Heart left ventricle (tissue), 16 donors: ENCODE measurements at regions of chr3 and their contacts with region 1.

Region 1: GRCh38 chr3:169271936-169272335 is 391.6 kb downstream of the MECOM start:
- DNase-seq: no peak
- ATAC-seq: no peak
- H3K4me3 ChIP-seq: no peak overlapping the region
- H3K27ac ChIP-seq: no peak overlapping the region
- H3K4me1 ChIP-seq: no peaks in the 10 kb centered on the region
- H3K27me3 ChIP-seq: no peaks in the 10 kb centered on the region
- CTCF ChIP-seq: no peak
- POLR2A ChIP-seq: no peak

Region 2: GRCh38 chr3:168534761-168535160 is 737.2 kb before region 1 on chr3:
- intact Hi-C with region 1: no loop called
- DNase-seq: no peak
- ATAC-seq: no peak
- H3K4me3 ChIP-seq: no peak overlapping the region
- H3K27ac ChIP-seq: no peak overlapping the region
- H3K4me1 ChIP-seq: no peaks in the 10 kb centered on the region
- H3K27me3 ChIP-seq: no peaks in the 10 kb centered on the region
- CTCF ChIP-seq: no peak
- POLR2A ChIP-seq: no peak

Region 3: DNA sequence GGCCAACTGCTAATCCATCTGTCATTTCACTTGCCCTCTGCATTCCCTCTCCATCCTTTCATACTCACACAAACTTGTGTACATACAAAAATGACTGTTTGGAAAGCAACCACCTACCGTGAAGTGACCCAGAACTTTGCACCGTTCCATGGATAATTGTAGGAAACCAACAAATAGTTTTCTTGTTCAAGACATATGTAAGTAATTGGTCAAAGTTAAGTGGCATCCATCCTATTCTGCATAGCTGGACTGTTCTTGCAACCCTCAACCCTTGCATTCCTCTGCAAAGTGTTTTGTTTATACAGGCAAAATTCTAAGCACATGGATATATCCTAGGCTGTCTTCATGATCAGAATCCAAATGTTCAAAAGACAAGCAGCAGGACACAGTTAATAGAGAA is 200.9 kb before region 1 on chr3:
- intact Hi-C with region 1: no loop called
- DNase-seq: no peak
- ATAC-seq: no peak
- H3K4me3 ChIP-seq: no peak overlapping the region
- H3K27ac ChIP-seq: no peak overlapping the region
- H3K4me1 ChIP-seq: no peaks in the 10 kb centered on the region
- H3K27me3 ChIP-seq: no peaks in the 10 kb centered on the region
- CTCF ChIP-seq: no peak
- POLR2A ChIP-seq: no peak

Region 4: DNA sequence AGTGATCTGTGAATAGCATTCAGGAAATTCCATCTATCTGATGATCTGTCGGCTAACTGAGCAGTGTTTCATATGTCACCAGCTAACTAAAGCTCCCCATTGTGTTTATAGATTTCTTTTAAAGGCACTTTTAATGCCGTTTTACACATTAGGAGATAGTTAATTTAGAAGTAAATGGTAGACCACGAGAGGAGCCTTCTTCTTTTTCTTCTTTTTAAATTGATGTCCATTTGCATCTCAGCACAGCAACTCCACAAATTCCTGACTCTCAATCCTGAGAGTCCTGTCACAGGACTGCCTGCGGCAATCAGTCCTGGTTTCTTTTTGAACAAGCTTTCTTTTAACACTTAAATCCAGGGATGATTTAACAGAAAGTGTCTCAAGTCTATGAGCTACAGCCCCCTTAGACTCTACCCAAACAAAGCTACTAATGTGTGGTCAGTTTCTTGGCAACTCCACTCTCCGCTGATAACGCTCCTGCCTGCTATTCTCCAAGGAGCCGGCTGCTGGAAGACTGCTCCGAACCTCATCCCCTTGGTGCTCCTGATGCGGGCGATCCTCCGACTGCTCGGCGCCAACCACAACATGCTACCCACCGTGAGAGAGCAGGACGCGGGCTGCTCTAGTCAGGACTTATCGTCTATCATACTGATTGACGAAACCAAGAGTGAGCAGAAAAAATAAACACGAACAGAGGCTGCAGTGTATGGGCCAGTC is 29.8 kb before region 1 on chr3:
- intact Hi-C with region 1: loop called in 1 of 10 experiments (anchors 2 kb)
- DNase-seq: peak; percentile 30 to 72 (median 49)
- ATAC-seq: peak; percentile 69 to 80 (median 76)
- H3K4me3 ChIP-seq: peak overlapping the region in 11 of 12 donors; percentile 21 to 59 (median 48)
- H3K27ac ChIP-seq: peak overlapping the region; percentile 35 to 81 (median 66)
- H3K4me1 ChIP-seq: peaks cover 0 to 31% (median 7%) of the 10 kb centered on the region in 12 donors
- H3K27me3 ChIP-seq: peaks cover 0 to 11% (median 0%) of the 10 kb centered on the region in 9 donors
- CTCF ChIP-seq: no peak
- POLR2A ChIP-seq: no peak

Region 5: GRCh38 chr3:169348929-169349613 is 77.1 kb after region 1 on chr3:
- intact Hi-C with region 1: no loop called
- DNase-seq: no peak
- ATAC-seq: no peak
- H3K4me3 ChIP-seq: no peak overlapping the region
- H3K27ac ChIP-seq: no peak overlapping the region
- H3K4me1 ChIP-seq: peaks cover 0 to 11% (median 0%) of the 10 kb centered on the region in 12 donors
- H3K27me3 ChIP-seq: peaks cover 0 to under 1% (median 0%) of the 10 kb centered on the region in 9 donors
- CTCF ChIP-seq: no peak
- POLR2A ChIP-seq: no peak